CD8-positive, alpha-beta T cell (primary cell): ENCODE measurements at regions of chr22 and their contacts with region 1.

Region 1: DNA sequence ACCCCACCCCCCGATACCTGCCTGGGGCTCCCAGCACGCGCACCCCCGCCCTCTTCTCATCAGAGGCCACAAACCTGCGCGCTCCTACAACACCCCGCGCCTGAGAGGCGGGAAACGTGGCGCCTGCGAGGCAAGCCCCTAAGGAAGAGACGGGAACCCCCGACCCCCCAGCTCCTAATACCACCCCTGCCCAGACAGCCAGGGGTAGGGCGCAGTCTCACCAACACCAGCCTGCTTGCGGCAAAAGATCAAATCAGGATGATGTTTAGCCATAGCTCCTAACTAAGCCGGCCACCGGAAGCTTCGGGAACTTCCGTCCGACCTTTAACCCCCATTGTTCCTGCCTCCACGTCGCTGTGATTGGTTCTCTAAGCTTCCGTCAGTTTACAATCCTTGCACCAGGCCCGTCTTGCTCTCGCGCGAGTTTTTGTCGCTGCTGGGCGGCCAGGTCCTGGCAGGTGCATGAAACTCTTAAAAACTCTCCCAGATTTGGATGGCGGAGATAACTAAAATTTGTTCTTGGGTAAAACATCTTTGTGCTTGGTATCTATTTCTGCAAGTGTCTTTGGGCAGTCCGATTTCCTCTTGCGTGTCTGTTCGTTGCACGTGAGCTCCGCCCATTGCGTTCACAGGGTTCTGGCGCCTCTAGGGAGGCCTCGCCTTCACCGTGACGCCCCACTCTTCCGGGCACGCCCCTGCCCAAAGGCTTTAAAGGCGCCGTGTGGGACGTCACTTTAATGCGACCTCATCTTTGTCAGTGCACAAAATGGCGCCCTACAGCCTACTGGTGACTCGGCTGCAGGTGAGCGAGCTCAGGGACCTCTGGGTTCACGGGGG is at the starts of genes ACO2 and PHF5A:
- DNase-seq: peak; percentile 97 to 99 (median 98)
- ATAC-seq: peak; percentile 90
- H3K4me3 ChIP-seq: peak within 1 kb of the TSS; percentile 92 to 94
- H3K4me3 Mint-ChIP-seq: peak within 1 kb of the TSS; percentile 91
- H3K27ac ChIP-seq: peak within 1 kb of the TSS; percentile 97 to 99
- H3K27ac Mint-ChIP-seq: peak within 1 kb of the TSS; percentile 99
- H3K4me1 ChIP-seq: peaks cover 23% of the 10 kb centered on the region
- H3K4me1 Mint-ChIP-seq: peaks cover 56% of the 10 kb centered on the region
- H3K27me3 ChIP-seq: no peaks in the 10 kb centered on the region
- H3K27me3 Mint-ChIP-seq: no peaks in the 10 kb centered on the region
- CTCF ChIP-seq: no peak
- total RNA-seq, gene ACO2: 83.7 to 95.2 TPM
- total RNA-seq, gene PHF5A: 52.9 to 57.4 TPM

Region 2: GRCh38 chr22:40856513-40857308 is 611.9 kb before region 1 on chr22 and contains the starts of genes ST13 and XPNPEP3:
- CTCF ChIA-PET with region 1: no interaction called
- POLR2A ChIA-PET with region 1: interaction called, 3 read pairs
- intact Hi-C with region 1: loop called in 1 of 2 experiments (anchors 1 kb)
- DNase-seq: peak; percentile 92 to 98 (median 97)
- ATAC-seq: peak; percentile 88
- H3K4me3 ChIP-seq: peak within 1 kb of the TSS; percentile 85 to 97
- H3K4me3 Mint-ChIP-seq: peak within 1 kb of the TSS; percentile 98
- H3K27ac ChIP-seq: peak within 1 kb of the TSS; percentile 97 to 99
- H3K27ac Mint-ChIP-seq: peak within 1 kb of the TSS; percentile 100
- H3K4me1 ChIP-seq: peaks cover 40% of the 10 kb centered on the region
- H3K4me1 Mint-ChIP-seq: peaks cover 65% of the 10 kb centered on the region
- H3K27me3 ChIP-seq: no peaks in the 10 kb centered on the region
- H3K27me3 Mint-ChIP-seq: no peaks in the 10 kb centered on the region
- CTCF ChIP-seq: peak; percentile 42
- total RNA-seq, gene ST13: 143 to 160 TPM
- total RNA-seq, gene XPNPEP3: 13.9 to 15.2 TPM

Region 3: GRCh38 chr22:40939202-40939601 is 529.4 kb before region 1 on chr22:
- CTCF ChIA-PET with region 1: no interaction called
- POLR2A ChIA-PET with region 1: no interaction called
- intact Hi-C with region 1: no loop called
- DNase-seq: no peak
- ATAC-seq: no peak
- H3K4me3 ChIP-seq: no peak overlapping the region
- H3K4me3 Mint-ChIP-seq: no peak overlapping the region
- H3K27ac ChIP-seq: no peak overlapping the region
- H3K27ac Mint-ChIP-seq: no peak overlapping the region
- H3K4me1 ChIP-seq: no peaks in the 10 kb centered on the region
- H3K4me1 Mint-ChIP-seq: peaks cover 2% of the 10 kb centered on the region
- H3K27me3 ChIP-seq: no peaks in the 10 kb centered on the region
- H3K27me3 Mint-ChIP-seq: no peaks in the 10 kb centered on the region
- CTCF ChIP-seq: no peak

Region 4: DNA sequence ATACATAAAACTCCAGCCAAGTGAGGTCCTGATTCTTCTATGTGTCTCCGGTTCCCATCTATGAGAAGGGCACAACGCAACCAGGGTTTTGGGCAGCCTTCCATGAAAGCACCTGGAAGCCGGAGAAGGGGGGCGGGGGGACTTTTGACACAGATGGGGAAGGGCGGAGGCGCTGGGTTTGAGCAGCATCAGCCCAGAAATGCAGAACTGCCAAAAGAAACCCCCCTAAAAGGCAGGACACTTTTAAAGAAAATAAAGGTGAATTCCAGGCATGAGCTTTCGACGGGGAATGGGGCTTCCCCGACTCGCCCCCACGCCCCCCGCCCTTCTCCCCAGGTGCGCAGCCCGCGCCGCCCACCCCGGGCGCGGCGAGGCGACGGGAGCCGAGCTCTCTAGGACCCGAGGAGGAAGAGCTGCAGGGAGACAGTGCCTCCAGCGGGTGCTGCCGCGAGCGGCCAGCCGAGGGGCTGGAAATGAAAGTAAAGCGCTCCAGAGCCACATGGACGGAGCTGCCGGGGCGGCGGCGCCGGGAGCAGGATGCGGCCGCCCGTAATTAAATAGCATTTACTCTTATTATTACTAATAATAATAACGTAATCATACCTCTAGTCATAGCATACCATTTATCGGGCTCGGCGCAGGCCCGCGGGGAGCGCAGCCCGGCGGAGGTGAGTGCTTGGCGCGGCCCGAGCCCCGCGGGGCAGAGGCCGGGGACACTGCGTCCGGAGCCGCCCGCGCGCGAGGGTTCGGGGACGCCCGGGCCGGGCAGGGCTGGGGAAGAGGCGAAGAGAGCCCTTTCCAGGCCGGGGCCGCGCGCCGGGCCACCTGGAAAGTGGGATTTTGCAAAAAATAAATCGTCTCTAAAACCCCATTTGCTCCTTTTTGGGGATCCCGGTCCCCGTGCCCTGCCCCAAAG is 167.2 kb before region 1 on chr22 and contains the start of gene ZC3H7B:
- CTCF ChIA-PET with region 1: no interaction called
- POLR2A ChIA-PET with region 1: interaction called, 3 read pairs
- intact Hi-C with region 1: loop called in 1 of 2 experiments (anchors 1 kb)
- DNase-seq: peak; percentile 64 to 94 (median 81)
- ATAC-seq: peak; percentile 93
- H3K4me3 ChIP-seq: peak within 1 kb of the TSS; percentile 81 to 96
- H3K4me3 Mint-ChIP-seq: peak within 1 kb of the TSS; percentile 83
- H3K27ac ChIP-seq: peak within 1 kb of the TSS; percentile 72 to 80
- H3K27ac Mint-ChIP-seq: peak within 1 kb of the TSS; percentile 95
- H3K4me1 ChIP-seq: peaks cover 16% of the 10 kb centered on the region
- H3K4me1 Mint-ChIP-seq: peaks cover 29% of the 10 kb centered on the region
- H3K27me3 ChIP-seq: no peaks in the 10 kb centered on the region
- H3K27me3 Mint-ChIP-seq: no peaks in the 10 kb centered on the region
- CTCF ChIP-seq: peak; percentile 43
- total RNA-seq, gene ZC3H7B: 30.7 to 30.8 TPM

Region 5: DNA sequence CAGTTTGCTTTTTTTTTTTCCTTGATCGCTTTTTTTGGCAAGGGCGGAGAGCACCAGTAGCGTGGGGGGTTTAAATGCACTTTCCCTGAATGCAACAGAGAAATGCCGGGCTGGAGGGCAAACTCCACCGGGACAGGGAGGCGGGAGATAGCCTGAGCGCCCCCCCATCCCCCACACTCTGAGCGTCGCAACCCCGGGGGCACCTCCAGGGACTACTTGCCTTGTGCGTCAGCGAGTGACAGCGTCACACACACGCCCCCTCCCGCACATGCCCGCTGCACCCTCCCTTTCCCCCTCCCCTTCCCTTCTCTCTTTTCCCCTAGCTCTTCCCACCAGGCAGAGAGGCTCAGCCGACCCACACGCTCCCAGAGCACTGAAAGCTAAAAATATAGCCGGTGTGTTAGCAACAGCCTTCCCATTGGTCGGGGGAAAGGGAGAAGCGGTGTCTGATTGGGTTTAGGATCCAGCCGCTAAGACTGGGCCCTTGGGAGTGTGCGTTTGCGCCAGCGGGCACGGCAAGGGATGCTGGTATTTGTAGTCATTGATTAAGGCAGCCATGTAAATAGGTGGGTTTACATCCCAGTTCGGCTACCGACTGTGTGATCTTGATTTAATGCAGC is 20.3 kb before region 1 on chr22:
- CTCF ChIA-PET with region 1: interaction called, 5 read pairs
- POLR2A ChIA-PET with region 1: interaction called, 85 read pairs
- intact Hi-C with region 1: loop called (anchors 1 kb)
- DNase-seq: peak; percentile 77 to 97 (median 88)
- ATAC-seq: peak; percentile 70
- H3K4me3 ChIP-seq: peak overlapping the region; percentile 79 to 96
- H3K4me3 Mint-ChIP-seq: peak overlapping the region; percentile 90
- H3K27ac ChIP-seq: peak overlapping the region; percentile 78 to 99
- H3K27ac Mint-ChIP-seq: peak overlapping the region; percentile 98
- H3K4me1 ChIP-seq: peaks cover 11% of the 10 kb centered on the region
- H3K4me1 Mint-ChIP-seq: peaks cover 23% of the 10 kb centered on the region
- H3K27me3 ChIP-seq: no peaks in the 10 kb centered on the region
- H3K27me3 Mint-ChIP-seq: no peaks in the 10 kb centered on the region
- CTCF ChIP-seq: no peak

Region 6: GRCh38 chr22:41526837-41527799 is 58.5 kb after region 1 on chr22:
- CTCF ChIA-PET with region 1: no interaction called
- POLR2A ChIA-PET with region 1: interaction called, 6 read pairs
- intact Hi-C with region 1: loop called in 1 of 2 experiments (anchors 2 kb)
- DNase-seq: peak; percentile 49 to 82 (median 72)
- ATAC-seq: peak; percentile 74
- H3K4me3 ChIP-seq: no peak overlapping the region
- H3K4me3 Mint-ChIP-seq: no peak overlapping the region
- H3K27ac ChIP-seq: peak overlapping the region in 1 of 2 experiments; percentile 42
- H3K27ac Mint-ChIP-seq: peak overlapping the region; percentile 70
- H3K4me1 ChIP-seq: peaks cover 19% of the 10 kb centered on the region
- H3K4me1 Mint-ChIP-seq: peaks cover 15% of the 10 kb centered on the region
- H3K27me3 ChIP-seq: no peaks in the 10 kb centered on the region
- H3K27me3 Mint-ChIP-seq: no peaks in the 10 kb centered on the region
- CTCF ChIP-seq: peak; percentile 71

Region 7: GRCh38 chr22:41589391-41590241 is 121.0 kb after region 1 on chr22 and contains the start of gene PMM1:
- CTCF ChIA-PET with region 1: no interaction called
- POLR2A ChIA-PET with region 1: interaction called, 6 read pairs
- intact Hi-C with region 1: loop called in 1 of 2 experiments (anchors 1 kb)
- DNase-seq: peak; percentile 100
- ATAC-seq: peak; percentile 97
- H3K4me3 ChIP-seq: peak within 1 kb of the TSS; percentile 94 to 98
- H3K4me3 Mint-ChIP-seq: peak within 1 kb of the TSS; percentile 92
- H3K27ac ChIP-seq: peak within 1 kb of the TSS; percentile 50 to 75
- H3K27ac Mint-ChIP-seq: peak within 1 kb of the TSS; percentile 88
- H3K4me1 ChIP-seq: peaks cover 17% of the 10 kb centered on the region
- H3K4me1 Mint-ChIP-seq: peaks cover 20% of the 10 kb centered on the region
- H3K27me3 ChIP-seq: no peaks in the 10 kb centered on the region
- H3K27me3 Mint-ChIP-seq: no peaks in the 10 kb centered on the region
- CTCF ChIP-seq: no peak
- total RNA-seq, gene PMM1: 19.1 to 22.4 TPM

Region 8: GRCh38 chr22:41688365-41689211 is 220.0 kb after region 1 on chr22 and contains the start of gene SNU13:
- CTCF ChIA-PET with region 1: no interaction called
- POLR2A ChIA-PET with region 1: no interaction called
- intact Hi-C with region 1: loop called in 1 of 2 experiments (anchors 10 kb)
- DNase-seq: peak; percentile 84 to 97 (median 93)
- ATAC-seq: peak; percentile 92
- H3K4me3 ChIP-seq: peak within 1 kb of the TSS; percentile 90 to 96
- H3K4me3 Mint-ChIP-seq: peak within 1 kb of the TSS; percentile 90
- H3K27ac ChIP-seq: peak within 1 kb of the TSS; percentile 97
- H3K27ac Mint-ChIP-seq: peak within 1 kb of the TSS; percentile 95
- H3K4me1 ChIP-seq: peaks cover 17% of the 10 kb centered on the region
- H3K4me1 Mint-ChIP-seq: peaks cover 30% of the 10 kb centered on the region
- H3K27me3 ChIP-seq: no peaks in the 10 kb centered on the region
- H3K27me3 Mint-ChIP-seq: no peaks in the 10 kb centered on the region
- CTCF ChIP-seq: no peak
- total RNA-seq, gene SNU13: 158 to 173 TPM